Esophagus muscularis mucosa (tissue), 4 donors: ENCODE measurements at regions of chr7 and their contacts with region 1.

Region 1: DNA sequence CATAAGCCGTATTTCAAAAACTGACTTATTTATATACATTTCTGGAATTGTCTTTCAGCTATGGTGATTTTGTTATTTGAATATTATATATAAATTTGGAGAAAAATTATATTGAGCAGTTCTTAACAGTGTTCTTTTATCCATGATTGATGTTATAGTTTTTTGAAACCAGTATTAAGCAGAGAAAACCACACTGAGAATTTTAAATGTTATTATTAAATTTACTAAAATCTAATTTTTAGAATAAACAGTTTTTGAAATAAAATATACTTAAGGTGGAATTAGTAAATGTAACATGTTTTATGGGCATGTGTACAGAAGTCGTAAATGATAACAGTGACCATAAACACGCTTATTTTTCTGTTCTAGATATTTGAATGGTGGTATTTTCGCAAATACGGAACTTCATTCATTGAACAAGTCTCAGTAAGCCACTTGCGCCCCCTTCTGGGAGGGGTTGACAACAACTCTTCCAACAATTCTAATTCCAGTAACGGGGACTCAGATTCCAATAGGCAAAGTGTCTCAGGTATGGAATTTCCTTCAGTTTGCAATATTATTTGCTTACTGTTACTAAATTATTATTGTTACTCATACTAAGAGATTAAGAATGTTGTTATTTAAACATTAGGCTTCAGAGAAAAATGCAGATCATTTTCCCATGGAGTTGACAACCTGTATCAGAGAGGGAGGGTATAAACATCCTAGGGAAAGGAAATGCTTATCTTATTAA is 166.1 kb downstream of the ST7 start:
- DNase-seq: peak; percentile 93
- H3K4me3 ChIP-seq: no peak overlapping the region
- H3K27ac ChIP-seq: no peak overlapping the region
- H3K4me1 ChIP-seq: peaks cover 4 to 25% (median 11%) of the 10 kb centered on the region in 4 donors
- H3K27me3 ChIP-seq: no peaks in the 10 kb centered on the region
- CTCF ChIP-seq: peak; percentile 83 to 86 (median 83)
- EP300 ChIP-seq: no peak
- POLR2A ChIP-seq: no peak

Region 2: DNA sequence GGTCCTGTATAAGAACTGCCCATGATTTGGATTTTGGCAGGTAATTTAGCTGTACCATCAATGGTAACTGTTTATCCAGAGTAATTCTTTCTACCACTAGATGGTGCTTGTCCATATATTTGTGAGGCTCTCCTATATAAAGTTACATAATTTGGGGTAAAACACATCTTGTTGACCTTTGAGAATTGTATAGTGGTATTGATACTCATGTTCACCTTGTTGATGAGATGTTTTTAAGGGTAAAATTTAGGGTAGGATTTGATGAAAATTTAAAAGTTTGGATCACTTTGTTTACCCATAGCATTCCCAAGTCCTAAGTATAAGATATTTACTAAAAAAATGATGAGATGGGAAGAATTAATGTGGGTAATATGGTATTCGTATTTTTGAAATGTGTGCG is 134.4 kb before region 1 on chr7:
- intact Hi-C with region 1: loop called (anchors 2 kb)
- DNase-seq: no peak
- H3K4me3 ChIP-seq: no peak overlapping the region
- H3K27ac ChIP-seq: no peak overlapping the region
- H3K4me1 ChIP-seq: peaks cover 0 to 3% (median 0%) of the 10 kb centered on the region in 4 donors
- H3K27me3 ChIP-seq: no peaks in the 10 kb centered on the region
- CTCF ChIP-seq: peak; percentile 63 to 67 (median 63)
- EP300 ChIP-seq: no peak
- POLR2A ChIP-seq: no peak

Region 3: DNA sequence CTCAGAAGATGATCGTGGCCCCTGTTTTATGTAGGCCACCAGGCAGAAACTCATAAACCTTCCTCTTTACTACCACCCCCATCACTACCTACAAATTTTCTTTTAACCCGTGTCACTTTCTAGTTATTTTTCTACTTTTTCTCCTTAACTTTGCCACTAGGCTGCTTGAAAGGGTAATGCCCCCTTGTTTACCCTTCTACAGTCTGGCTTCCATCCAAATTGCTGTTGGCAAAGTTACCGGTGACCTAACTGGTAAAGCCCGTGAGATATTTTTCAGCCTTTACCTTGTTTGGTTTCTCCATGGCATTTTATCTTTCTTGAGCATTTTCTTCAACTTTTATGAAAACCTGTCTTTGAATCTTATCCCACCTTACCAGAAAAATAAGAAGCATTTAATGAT is 50.5 kb after region 1 on chr7:
- intact Hi-C with region 1: no loop called
- DNase-seq: no peak
- H3K4me3 ChIP-seq: no peak overlapping the region
- H3K27ac ChIP-seq: no peak overlapping the region
- H3K4me1 ChIP-seq: peaks cover 0 to 12% (median 7%) of the 10 kb centered on the region in 4 donors
- H3K27me3 ChIP-seq: no peaks in the 10 kb centered on the region
- CTCF ChIP-seq: no peak
- EP300 ChIP-seq: no peak
- POLR2A ChIP-seq: no peak

Region 4: GRCh38 chr7:118298771-118299170 is 1179.4 kb after region 1 on chr7:
- intact Hi-C with region 1: no loop called
- DNase-seq: no peak
- H3K4me3 ChIP-seq: no peak overlapping the region
- H3K27ac ChIP-seq: no peak overlapping the region
- H3K4me1 ChIP-seq: no peaks in the 10 kb centered on the region
- H3K27me3 ChIP-seq: no peaks in the 10 kb centered on the region
- CTCF ChIP-seq: no peak
- EP300 ChIP-seq: no peak
- POLR2A ChIP-seq: no peak

Region 5: GRCh38 chr7:118372530-118372929 is 1253.2 kb after region 1 on chr7:
- intact Hi-C with region 1: no loop called
- DNase-seq: no peak
- H3K4me3 ChIP-seq: no peak overlapping the region
- H3K27ac ChIP-seq: no peak overlapping the region
- H3K4me1 ChIP-seq: no peaks in the 10 kb centered on the region
- H3K27me3 ChIP-seq: no peaks in the 10 kb centered on the region
- CTCF ChIP-seq: no peak
- EP300 ChIP-seq: no peak
- POLR2A ChIP-seq: no peak